Heart left ventricle (tissue), 16 donors: ENCODE measurements at regions of chr2 and their contacts with region 1.

Region 1: GRCh38 chr2:70553584-70554337 is at the start of gene TGFA:
- DNase-seq: peak; percentile 50 to 82 (median 60)
- ATAC-seq: peak; percentile 55 to 94 (median 88)
- H3K4me3 ChIP-seq: peak within 1 kb of the TSS; percentile 63 to 85 (median 70)
- H3K27ac ChIP-seq: peak within 1 kb of the TSS in 10 of 12 donors; percentile 13 to 81 (median 44)
- H3K4me1 ChIP-seq: peaks cover 0 to 23% (median 11%) of the 10 kb centered on the region in 12 donors
- H3K27me3 ChIP-seq: peaks cover 8 to 73% (median 21%) of the 10 kb centered on the region in 9 donors
- CTCF ChIP-seq: peak in 11 of 12 donors; percentile 47 to 75 (median 66)
- POLR2A ChIP-seq: peak in 1 of 2 donors; percentile 16
- total RNA-seq, gene TGFA: 0.56 to 4.9 (median 1.0) TPM

Region 2: DNA sequence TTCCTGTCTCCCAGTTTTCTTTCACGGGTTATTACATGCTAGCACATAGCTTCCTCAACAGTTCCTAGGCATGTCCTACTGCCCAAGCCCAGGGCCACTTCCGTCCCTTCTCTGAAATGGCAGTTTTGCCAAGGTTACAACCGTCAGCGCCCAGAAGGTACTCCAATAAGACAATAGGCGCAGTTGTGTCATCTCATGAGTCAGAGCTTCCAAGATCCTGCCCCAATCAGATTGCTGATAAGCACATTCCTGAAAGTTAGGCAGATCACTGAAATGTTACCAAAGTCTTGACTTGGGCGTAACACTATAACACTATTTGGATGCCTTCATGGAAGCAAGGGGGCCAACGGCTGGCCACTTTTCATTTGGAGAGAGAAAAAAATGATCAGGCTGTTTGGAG is 1635.3 kb before region 1 on chr2:
- intact Hi-C with region 1: no loop called
- DNase-seq: no peak
- ATAC-seq: no peak
- H3K4me3 ChIP-seq: no peak overlapping the region
- H3K27ac ChIP-seq: no peak overlapping the region
- H3K4me1 ChIP-seq: no peaks in the 10 kb centered on the region
- H3K27me3 ChIP-seq: no peaks in the 10 kb centered on the region
- CTCF ChIP-seq: no peak
- POLR2A ChIP-seq: no peak

Region 3: DNA sequence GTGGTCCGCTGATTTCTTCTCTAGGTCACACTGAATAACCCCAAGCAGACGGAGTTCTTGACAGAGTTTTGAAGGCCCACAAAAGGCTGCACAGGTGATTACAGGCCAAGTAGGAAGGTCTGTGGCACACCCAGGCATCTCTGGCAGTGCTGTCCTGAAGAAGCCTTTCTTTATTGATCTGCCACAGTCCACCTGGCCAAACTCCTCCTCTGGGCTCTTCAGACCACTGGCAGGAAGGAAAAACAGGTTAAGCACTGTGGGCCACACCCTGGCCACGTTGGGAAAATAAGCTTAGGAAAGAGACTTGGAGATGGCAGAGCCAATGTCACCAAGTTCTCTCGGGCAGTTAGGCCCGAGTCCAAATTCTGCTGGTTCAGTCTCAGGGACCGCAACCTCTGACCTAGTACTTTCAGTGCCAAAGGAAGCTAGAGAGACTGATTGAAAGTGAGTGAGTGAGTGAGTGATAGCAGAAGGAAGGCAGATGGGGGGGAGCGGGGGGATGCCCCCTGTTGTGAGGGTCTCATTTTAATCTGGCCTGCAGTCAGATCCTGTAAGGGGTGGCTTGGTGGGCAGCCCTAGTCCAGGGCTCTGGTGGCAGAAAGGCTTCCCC is 103.0 kb before region 1 on chr2:
- intact Hi-C with region 1: no loop called
- DNase-seq: no peak
- ATAC-seq: no peak
- H3K4me3 ChIP-seq: no peak overlapping the region
- H3K27ac ChIP-seq: no peak overlapping the region
- H3K4me1 ChIP-seq: no peaks in the 10 kb centered on the region
- H3K27me3 ChIP-seq: no peaks in the 10 kb centered on the region
- CTCF ChIP-seq: no peak
- POLR2A ChIP-seq: no peak

Region 4: GRCh38 chr2:70616168-70616694 is 62.5 kb after region 1 on chr2:
- intact Hi-C with region 1: loop called in 3 of 10 experiments (anchors 2 to 10 kb)
- DNase-seq: no peak
- ATAC-seq: no peak
- H3K4me3 ChIP-seq: no peak overlapping the region
- H3K27ac ChIP-seq: no peak overlapping the region
- H3K4me1 ChIP-seq: peaks cover 0 to 4% (median 0%) of the 10 kb centered on the region in 12 donors
- H3K27me3 ChIP-seq: peaks cover 0 to 16% (median 0%) of the 10 kb centered on the region in 9 donors
- CTCF ChIP-seq: no peak
- POLR2A ChIP-seq: no peak

Region 5: GRCh38 chr2:70828914-70829824 is 275.4 kb after region 1 on chr2:
- intact Hi-C with region 1: no loop called
- DNase-seq: peak in 1 of 5 donors; percentile 20
- ATAC-seq: peak in 3 of 4 donors; percentile 56 to 62 (median 61)
- H3K4me3 ChIP-seq: no peak overlapping the region
- H3K27ac ChIP-seq: peak overlapping the region in 2 of 12 donors; percentile 13 to 37
- H3K4me1 ChIP-seq: peaks cover 0 to 48% (median 11%) of the 10 kb centered on the region in 12 donors
- H3K27me3 ChIP-seq: peaks cover 0 to 6% (median 0%) of the 10 kb centered on the region in 9 donors
- CTCF ChIP-seq: no peak
- POLR2A ChIP-seq: no peak